ENCODE measurements at regions of chr1 and their contacts with region 1.

Region 1: DNA sequence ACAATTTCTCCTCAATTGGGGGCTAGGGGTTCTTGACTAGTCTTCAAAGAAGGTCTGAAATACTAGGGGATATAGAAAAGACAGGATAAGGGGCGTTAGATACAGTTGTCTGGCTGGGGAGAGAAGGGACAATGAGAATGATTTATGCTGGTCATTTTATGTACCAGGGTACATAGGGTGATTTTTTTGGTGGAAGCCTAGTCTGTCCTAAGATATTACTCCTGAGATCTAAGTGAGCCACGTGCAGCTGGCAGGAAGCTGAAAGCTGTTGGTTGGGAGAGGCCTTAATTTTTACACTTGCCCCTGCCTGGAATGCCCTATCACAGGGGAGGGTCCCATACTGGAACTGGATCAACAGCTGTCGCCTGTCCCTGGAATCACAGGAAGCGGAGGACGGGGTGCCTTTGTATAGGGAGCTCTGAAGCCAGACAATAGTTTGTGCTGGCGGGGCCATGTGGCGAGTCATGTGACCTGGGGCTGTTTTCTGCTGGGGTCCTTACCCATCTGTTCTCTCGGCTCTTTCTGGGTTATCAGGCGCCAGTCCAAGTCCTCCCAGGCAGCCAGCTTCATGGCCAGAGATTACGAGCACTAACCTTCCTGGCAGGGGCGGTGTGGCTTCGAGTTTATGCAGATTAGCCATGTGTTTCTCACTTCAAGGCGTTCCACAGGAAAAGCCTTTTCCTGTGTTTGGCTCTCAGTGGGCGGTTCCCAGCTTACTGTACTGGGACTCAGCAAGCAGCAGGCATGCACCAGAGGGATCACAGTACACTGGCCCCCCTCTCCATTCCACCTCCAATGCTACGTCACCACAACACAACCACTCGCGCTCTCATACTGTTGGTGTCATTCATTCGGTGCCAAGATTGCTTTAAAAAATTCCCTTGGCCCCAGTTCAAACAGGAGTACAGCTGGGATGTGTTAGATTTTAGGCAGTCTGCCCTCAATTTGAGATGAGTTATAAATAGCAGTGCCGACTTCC is 27.5 kb downstream of the ARID1A start:
- DNase-seq: peak; percentile 33 to 77
- ATAC-seq: peak; percentile 71 to 85 (median 73)
- H3K4me3 ChIP-seq: no peak overlapping the region
- H3K4me3 Mint-ChIP-seq: peak overlapping the region; percentile 68
- H3K27ac ChIP-seq: peak overlapping the region; percentile 1
- H3K27ac Mint-ChIP-seq: peak overlapping the region; percentile 78 to 85
- H3K4me1 ChIP-seq: peaks cover 62% of the 10 kb centered on the region
- H3K4me1 Mint-ChIP-seq: peaks cover 85 to 86% of the 10 kb centered on the region in 2 donors
- H3K27me3 ChIP-seq: no peaks in the 10 kb centered on the region
- H3K27me3 Mint-ChIP-seq: no peaks in the 10 kb centered on the region
- CTCF ChIP-seq: no peak

Region 2: GRCh38 chr1:24735509-24736375 is 1987.6 kb before region 1 on chr1:
- intact Hi-C with region 1: no loop called
- DNase-seq: no peak
- ATAC-seq: no peak
- H3K4me3 ChIP-seq: no peak overlapping the region
- H3K4me3 Mint-ChIP-seq: no peak overlapping the region
- H3K27ac ChIP-seq: no peak overlapping the region
- H3K27ac Mint-ChIP-seq: no peak overlapping the region
- H3K4me1 ChIP-seq: no peaks in the 10 kb centered on the region
- H3K4me1 Mint-ChIP-seq: peaks cover 0 to 3% of the 10 kb centered on the region in 2 donors
- H3K27me3 ChIP-seq: no peaks in the 10 kb centered on the region
- H3K27me3 Mint-ChIP-seq: no peaks in the 10 kb centered on the region
- CTCF ChIP-seq: no peak

Region 3: DNA sequence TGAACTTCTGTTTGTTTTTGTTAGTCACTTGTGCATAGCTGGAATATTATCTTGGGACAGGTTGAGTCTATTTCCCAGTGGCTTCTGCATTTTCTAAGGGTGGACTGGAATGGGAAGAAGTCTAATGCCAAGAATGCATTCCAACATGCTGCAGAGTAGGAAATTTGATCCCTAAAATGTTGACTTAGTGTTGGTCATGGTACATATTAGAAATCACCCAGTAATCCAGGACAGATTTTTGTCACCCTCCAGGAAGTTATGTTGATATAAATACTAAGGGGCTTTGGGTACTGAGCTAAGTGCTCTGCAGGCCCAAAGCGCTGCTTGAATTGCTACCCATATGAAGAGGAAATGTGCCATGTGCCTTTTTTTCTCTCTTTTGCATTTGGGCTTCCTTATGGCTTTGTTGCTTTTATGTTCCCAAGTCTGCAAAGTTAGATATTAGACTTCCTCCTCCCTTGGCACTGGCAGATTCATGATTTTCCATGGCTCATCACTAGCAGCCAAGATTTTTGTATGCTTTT is 17.5 kb before region 1 on chr1:
- intact Hi-C with region 1: loop called (anchors 2 kb)
- DNase-seq: peak in 1 of 2 donors; percentile 26
- ATAC-seq: no peak
- H3K4me3 ChIP-seq: no peak overlapping the region
- H3K4me3 Mint-ChIP-seq: peak overlapping the region; percentile 68
- H3K27ac ChIP-seq: no peak overlapping the region
- H3K27ac Mint-ChIP-seq: peak overlapping the region; percentile 82 to 85
- H3K4me1 ChIP-seq: peaks cover 36% of the 10 kb centered on the region
- H3K4me1 Mint-ChIP-seq: peaks cover 34 to 51% of the 10 kb centered on the region in 2 donors
- H3K27me3 ChIP-seq: no peaks in the 10 kb centered on the region
- H3K27me3 Mint-ChIP-seq: no peaks in the 10 kb centered on the region
- CTCF ChIP-seq: no peak